ENCODE measurements at regions of chr6 and their contacts with region 1.

Region 1: DNA sequence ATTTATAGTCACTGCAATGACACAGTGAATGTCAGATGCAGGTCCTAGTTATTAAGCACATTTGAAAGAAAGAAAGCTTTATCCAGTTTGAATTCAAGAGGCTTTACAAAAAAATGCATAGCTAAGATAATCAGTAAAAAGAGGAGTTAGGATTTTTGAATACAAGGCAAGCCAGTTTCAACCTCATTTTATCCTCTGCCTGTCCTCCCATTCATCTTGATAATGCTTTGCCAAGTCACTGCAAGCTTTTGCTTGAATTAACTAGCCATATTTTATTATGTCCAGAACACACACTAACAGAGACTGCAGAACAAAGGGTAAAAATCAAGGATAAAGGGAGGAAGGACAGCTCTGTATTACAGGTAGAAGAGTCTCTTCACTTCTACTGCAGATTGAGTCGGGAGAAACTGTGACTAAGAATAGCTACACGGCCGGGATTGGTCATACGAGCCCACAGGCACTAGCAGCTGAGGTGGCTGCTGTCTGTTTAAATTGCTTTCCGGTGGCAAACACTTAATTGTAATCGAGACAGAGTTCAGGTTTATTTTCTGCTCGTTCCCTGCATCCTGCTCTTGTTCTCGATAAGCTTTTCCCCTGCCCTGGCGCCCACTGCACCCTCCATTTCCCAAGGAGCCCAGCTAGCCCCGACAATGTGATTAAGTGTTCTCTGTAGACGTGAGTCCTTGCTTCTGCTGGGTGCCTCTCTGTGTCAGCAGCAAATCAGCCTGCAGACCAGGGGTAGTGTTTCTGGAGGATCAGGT is 30.5 kb upstream of the AKAP12 start:
- DNase-seq: peak; percentile 75
- H3K4me3 ChIP-seq: no peak overlapping the region
- H3K27ac ChIP-seq: no peak overlapping the region
- H3K4me1 ChIP-seq: peaks cover 4% of the 10 kb centered on the region
- H3K27me3 ChIP-seq: no peaks in the 10 kb centered on the region
- CTCF ChIP-seq: no peak

Region 2: GRCh38 chr6:151112130-151112529 is 97.1 kb before region 1 on chr6:
- CTCF ChIA-PET with region 1: no interaction called
- dilution Hi-C with region 1: loop called (anchors 5 kb)
- in situ Hi-C with region 1: no loop called
- intact Hi-C with region 1: no loop called
- DNase-seq: no peak
- H3K4me3 ChIP-seq: no peak overlapping the region
- H3K27ac ChIP-seq: no peak overlapping the region
- H3K4me1 ChIP-seq: no peaks in the 10 kb centered on the region
- H3K27me3 ChIP-seq: no peaks in the 10 kb centered on the region
- CTCF ChIP-seq: no peak

Measured in mammary epithelial cell (primary cell).